Ascending aorta (tissue), 2 donors: ENCODE measurements at regions of chr3 and their contacts with region 1.

Region 1: GRCh38 chr3:184174646-184175492 is at the start of gene AP2M1:
- DNase-seq: peak; percentile 98 to 100
- H3K4me3 ChIP-seq: peak within 1 kb of the TSS; percentile 96 to 97
- H3K27ac ChIP-seq: peak within 1 kb of the TSS; percentile 91 to 96
- H3K4me1 ChIP-seq: peaks cover 11 to 18% of the 10 kb centered on the region in 2 donors
- H3K27me3 ChIP-seq: no peaks in the 10 kb centered on the region
- CTCF ChIP-seq: no peak
- total RNA-seq, gene AP2M1: 101 TPM

Region 2: GRCh38 chr3:183377307-183377959 is 797.4 kb before region 1 on chr3:
- intact Hi-C with region 1: no loop called
- DNase-seq: no peak
- H3K4me3 ChIP-seq: no peak overlapping the region
- H3K27ac ChIP-seq: no peak overlapping the region
- H3K4me1 ChIP-seq: no peaks in the 10 kb centered on the region
- H3K27me3 ChIP-seq: no peaks in the 10 kb centered on the region
- CTCF ChIP-seq: no peak

Region 3: DNA sequence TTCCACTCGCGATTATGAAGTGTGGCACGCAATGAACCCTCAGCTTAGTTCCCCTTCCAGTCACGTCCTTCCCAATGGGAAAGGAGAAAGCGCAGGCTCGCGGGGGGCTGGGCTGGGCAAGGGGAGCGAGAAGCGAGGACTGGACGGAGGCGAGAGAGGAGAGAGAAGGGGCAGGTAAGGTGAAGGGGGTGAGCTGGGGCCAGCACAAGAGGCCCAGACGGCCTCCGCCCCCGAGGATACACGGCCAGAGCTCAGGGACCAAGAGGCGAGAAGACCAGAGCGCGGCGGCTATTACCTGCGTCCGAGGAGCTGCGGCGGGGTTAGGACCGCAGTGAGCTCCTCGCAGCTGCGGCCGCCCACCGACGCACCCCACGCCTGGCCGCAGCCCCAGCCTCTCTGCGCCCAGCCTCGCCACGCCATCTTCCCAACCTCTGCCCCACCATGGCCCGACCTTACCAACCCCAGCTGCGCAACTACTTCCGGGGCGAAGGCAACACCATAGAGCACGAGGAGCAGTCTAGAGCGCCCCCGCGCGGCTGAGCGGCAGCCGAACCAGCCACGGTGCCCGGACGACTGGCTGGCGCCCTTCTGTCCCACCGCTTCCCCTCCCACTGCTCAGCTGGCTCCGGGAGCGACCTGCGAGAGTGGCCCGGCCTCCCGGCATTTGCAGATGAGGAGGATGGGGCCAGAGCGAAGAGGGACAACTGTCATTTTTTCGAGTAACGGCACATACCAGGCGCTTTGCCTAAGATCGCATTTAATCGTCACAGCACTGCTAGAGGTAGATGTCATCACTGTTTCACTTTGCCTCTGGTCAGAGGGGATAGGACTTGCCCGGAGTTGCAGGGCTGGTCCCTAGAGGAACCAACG is 290.2 kb before region 1 on chr3 and contains the start of gene PARL:
- intact Hi-C with region 1: loop called (anchors 10 kb)
- DNase-seq: peak; percentile 80 to 98
- H3K4me3 ChIP-seq: peak within 1 kb of the TSS; percentile 89 to 90
- H3K27ac ChIP-seq: peak within 1 kb of the TSS; percentile 75 to 81
- H3K4me1 ChIP-seq: peaks cover 0 to 21% of the 10 kb centered on the region in 2 donors
- H3K27me3 ChIP-seq: no peaks in the 10 kb centered on the region
- CTCF ChIP-seq: peak; percentile 89 to 92 (median 92)
- total RNA-seq, gene PARL: 14.3 TPM

Region 4: GRCh38 chr3:184135149-184135910 is 39.5 kb before region 1 on chr3 and contains the start of gene EIF2B5:
- intact Hi-C with region 1: loop called (anchors 1 kb)
- DNase-seq: peak; percentile 71 to 96
- H3K4me3 ChIP-seq: peak within 1 kb of the TSS; percentile 74 to 91
- H3K27ac ChIP-seq: peak within 1 kb of the TSS; percentile 90 to 91
- H3K4me1 ChIP-seq: peaks cover 3 to 9% of the 10 kb centered on the region in 2 donors
- H3K27me3 ChIP-seq: no peaks in the 10 kb centered on the region
- CTCF ChIP-seq: peak in 2 of 3 experiments; percentile 44 to 51
- total RNA-seq, gene EIF2B5: 24.7 TPM

Region 5: GRCh38 chr3:184154885-184155643 is 19.8 kb before region 1 on chr3 and contains the start of gene DVL3:
- intact Hi-C with region 1: loop called (anchors 1 kb)
- DNase-seq: peak in 1 of 2 donors; percentile 81
- H3K4me3 ChIP-seq: peak within 1 kb of the TSS; percentile 80 to 97
- H3K27ac ChIP-seq: peak within 1 kb of the TSS; percentile 87 to 89
- H3K4me1 ChIP-seq: peaks cover 9 to 21% of the 10 kb centered on the region in 2 donors
- H3K27me3 ChIP-seq: no peaks in the 10 kb centered on the region
- CTCF ChIP-seq: no peak
- total RNA-seq, gene DVL3: 36.6 TPM

Region 6: GRCh38 chr3:184185461-184186308 is 10.8 kb after region 1 on chr3 and contains the start of gene ABCF3:
- intact Hi-C with region 1: loop called (anchors 1 kb)
- DNase-seq: peak; percentile 98 to 100
- H3K4me3 ChIP-seq: peak within 1 kb of the TSS; percentile 91 to 97
- H3K27ac ChIP-seq: peak within 1 kb of the TSS; percentile 87 to 93
- H3K4me1 ChIP-seq: peaks cover 0 to 16% of the 10 kb centered on the region in 2 donors
- H3K27me3 ChIP-seq: no peaks in the 10 kb centered on the region
- CTCF ChIP-seq: no peak
- total RNA-seq, gene ABCF3: 93.3 TPM

Region 7: GRCh38 chr3:184298759-184299496 is 124.1 kb after region 1 on chr3 and contains the start of gene PSMD2:
- intact Hi-C with region 1: loop called (anchors 1 kb)
- DNase-seq: peak; percentile 84 to 99
- H3K4me3 ChIP-seq: peak within 1 kb of the TSS; percentile 75 to 78
- H3K27ac ChIP-seq: peak within 1 kb of the TSS; percentile 73 to 76
- H3K4me1 ChIP-seq: no peaks in the 10 kb centered on the region
- H3K27me3 ChIP-seq: no peaks in the 10 kb centered on the region
- CTCF ChIP-seq: peak in 1 of 3 experiments; percentile 18
- total RNA-seq, gene PSMD2: 151 TPM

Region 8: DNA sequence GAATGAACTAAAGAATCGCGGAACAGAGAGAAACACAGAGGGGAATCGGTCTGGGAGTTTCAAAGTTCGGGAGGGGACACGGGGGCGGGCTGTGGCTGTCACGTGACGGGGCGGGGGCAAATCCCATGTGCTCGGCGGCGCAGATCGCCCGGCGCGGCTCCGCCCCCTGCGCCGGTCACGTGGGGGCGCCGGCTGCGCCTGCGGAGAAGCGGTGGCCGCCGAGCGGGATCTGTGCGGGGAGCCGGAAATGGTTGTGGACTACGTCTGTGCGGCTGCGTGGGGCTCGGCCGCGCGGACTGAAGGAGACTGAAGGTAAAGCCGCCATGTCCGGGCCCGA is 139.5 kb after region 1 on chr3 and contains the start of gene EIF4G1:
- intact Hi-C with region 1: loop called (anchors 1 kb)
- DNase-seq: peak; percentile 78 to 96
- H3K4me3 ChIP-seq: peak within 1 kb of the TSS; percentile 76 to 79
- H3K27ac ChIP-seq: peak within 1 kb of the TSS; percentile 95 to 98
- H3K4me1 ChIP-seq: peaks cover 17 to 33% of the 10 kb centered on the region in 2 donors
- H3K27me3 ChIP-seq: no peaks in the 10 kb centered on the region
- CTCF ChIP-seq: no peak
- total RNA-seq, gene EIF4G1: 192 TPM